Activated naive CD4-positive, alpha-beta T cell treated with anti-CD3 and anti-CD28 coated beads for 36 hours (primary cell): ENCODE measurements at regions of chr14 and their contacts with region 1.

Region 1: GRCh38 chr14:55430024-55430690 is 10.3 kb downstream of the TBPL2 start:
- DNase-seq: peak; percentile 71
- H3K4me3 Mint-ChIP-seq: no peak overlapping the region
- H3K27ac Mint-ChIP-seq: peak overlapping the region; percentile 62
- H3K4me1 Mint-ChIP-seq: peaks cover 29% of the 10 kb centered on the region
- H3K27me3 Mint-ChIP-seq: no peaks in the 10 kb centered on the region

Region 2: GRCh38 chr14:55094321-55095157 is 335.6 kb before region 1 on chr14:
- CTCF ChIA-PET with region 1: no interaction called
- intact Hi-C with region 1: loop called (anchors 1 kb)
- DNase-seq: no peak
- H3K4me3 Mint-ChIP-seq: no peak overlapping the region
- H3K27ac Mint-ChIP-seq: no peak overlapping the region
- H3K4me1 Mint-ChIP-seq: peaks cover 17% of the 10 kb centered on the region
- H3K27me3 Mint-ChIP-seq: no peaks in the 10 kb centered on the region

Region 3: DNA sequence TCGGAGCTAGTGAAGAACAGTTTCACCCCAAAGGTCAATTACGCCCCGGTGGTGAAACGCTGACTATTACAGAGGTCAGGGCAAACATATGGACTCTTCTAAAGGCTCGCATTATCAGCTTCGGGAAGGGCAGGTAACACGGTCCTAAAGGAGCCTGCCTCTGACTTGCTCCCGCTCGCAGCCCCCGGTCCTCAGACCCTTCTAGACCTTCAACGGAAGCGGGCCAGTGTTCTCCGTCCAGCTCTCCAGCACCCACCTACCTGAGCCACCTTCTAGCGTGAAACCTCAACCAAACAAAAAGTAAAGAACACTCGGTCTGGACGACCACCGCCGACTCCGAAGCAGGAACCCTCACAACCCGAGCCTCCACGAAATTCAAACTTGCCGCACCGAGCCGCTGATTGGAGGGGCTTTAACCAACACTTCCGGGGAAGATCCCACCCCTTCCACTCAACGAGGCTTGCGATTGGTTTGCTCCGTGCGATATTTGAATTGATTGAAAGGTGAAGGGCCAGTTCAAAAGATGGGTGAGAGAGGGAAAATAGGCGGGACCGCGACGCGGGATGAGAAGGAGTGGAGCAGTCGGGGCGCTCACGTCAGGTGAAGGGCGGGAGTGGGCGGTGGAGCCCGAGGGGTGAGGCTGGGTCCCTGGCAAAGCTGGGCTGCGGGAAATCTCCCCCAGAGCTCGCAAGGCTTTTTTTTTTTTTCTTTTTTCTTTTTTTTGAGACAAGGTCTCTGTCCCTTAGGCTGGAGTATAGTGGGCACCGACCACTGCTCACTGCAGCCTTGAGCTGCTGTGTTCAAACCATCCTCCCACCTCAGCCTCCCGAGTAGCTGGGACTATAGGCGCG is 238.7 kb before region 1 on chr14 and contains the start of gene DLGAP5:
- CTCF ChIA-PET with region 1: no interaction called
- intact Hi-C with region 1: loop called (anchors 1 kb)
- DNase-seq: peak; percentile 97
- H3K4me3 Mint-ChIP-seq: peak within 1 kb of the TSS; percentile 99
- H3K27ac Mint-ChIP-seq: peak within 1 kb of the TSS; percentile 89
- H3K4me1 Mint-ChIP-seq: peaks cover 26% of the 10 kb centered on the region
- H3K27me3 Mint-ChIP-seq: peaks cover 2% of the 10 kb centered on the region
- total RNA-seq, gene DLGAP5: 117 to 120 TPM

Region 4: GRCh38 chr14:55212634-55213033 is 217.5 kb before region 1 on chr14:
- CTCF ChIA-PET with region 1: interaction called, 7 read pairs
- intact Hi-C with region 1: loop called (anchors 1 kb)
- DNase-seq: no peak
- H3K4me3 Mint-ChIP-seq: no peak overlapping the region
- H3K27ac Mint-ChIP-seq: no peak overlapping the region
- H3K4me1 Mint-ChIP-seq: peaks cover 4% of the 10 kb centered on the region
- H3K27me3 Mint-ChIP-seq: no peaks in the 10 kb centered on the region

Region 5: GRCh38 chr14:55245657-55246268 is 184.4 kb before region 1 on chr14:
- CTCF ChIA-PET with region 1: interaction called, 5 read pairs
- intact Hi-C with region 1: loop called (anchors 1 kb)
- DNase-seq: peak; percentile 53
- H3K4me3 Mint-ChIP-seq: no peak overlapping the region
- H3K27ac Mint-ChIP-seq: no peak overlapping the region
- H3K4me1 Mint-ChIP-seq: peaks cover 2% of the 10 kb centered on the region
- H3K27me3 Mint-ChIP-seq: peaks cover 4% of the 10 kb centered on the region

Region 6: GRCh38 chr14:55416866-55417265 is 13.3 kb before region 1 on chr14:
- CTCF ChIA-PET with region 1: interaction called, 36 read pairs
- intact Hi-C with region 1: no loop called
- DNase-seq: peak; percentile 51
- H3K4me3 Mint-ChIP-seq: no peak overlapping the region
- H3K27ac Mint-ChIP-seq: no peak overlapping the region
- H3K4me1 Mint-ChIP-seq: peaks cover 6% of the 10 kb centered on the region
- H3K27me3 Mint-ChIP-seq: no peaks in the 10 kb centered on the region

Region 7: GRCh38 chr14:55446218-55446654 is 16.1 kb after region 1 on chr14:
- CTCF ChIA-PET with region 1: interaction called, 16 read pairs
- intact Hi-C with region 1: no loop called
- DNase-seq: peak; percentile 76
- H3K4me3 Mint-ChIP-seq: no peak overlapping the region
- H3K27ac Mint-ChIP-seq: no peak overlapping the region
- H3K4me1 Mint-ChIP-seq: peaks cover 13% of the 10 kb centered on the region
- H3K27me3 Mint-ChIP-seq: no peaks in the 10 kb centered on the region